ENCODE measurements at regions of chr19 and their contacts with region 1.

Region 1: DNA sequence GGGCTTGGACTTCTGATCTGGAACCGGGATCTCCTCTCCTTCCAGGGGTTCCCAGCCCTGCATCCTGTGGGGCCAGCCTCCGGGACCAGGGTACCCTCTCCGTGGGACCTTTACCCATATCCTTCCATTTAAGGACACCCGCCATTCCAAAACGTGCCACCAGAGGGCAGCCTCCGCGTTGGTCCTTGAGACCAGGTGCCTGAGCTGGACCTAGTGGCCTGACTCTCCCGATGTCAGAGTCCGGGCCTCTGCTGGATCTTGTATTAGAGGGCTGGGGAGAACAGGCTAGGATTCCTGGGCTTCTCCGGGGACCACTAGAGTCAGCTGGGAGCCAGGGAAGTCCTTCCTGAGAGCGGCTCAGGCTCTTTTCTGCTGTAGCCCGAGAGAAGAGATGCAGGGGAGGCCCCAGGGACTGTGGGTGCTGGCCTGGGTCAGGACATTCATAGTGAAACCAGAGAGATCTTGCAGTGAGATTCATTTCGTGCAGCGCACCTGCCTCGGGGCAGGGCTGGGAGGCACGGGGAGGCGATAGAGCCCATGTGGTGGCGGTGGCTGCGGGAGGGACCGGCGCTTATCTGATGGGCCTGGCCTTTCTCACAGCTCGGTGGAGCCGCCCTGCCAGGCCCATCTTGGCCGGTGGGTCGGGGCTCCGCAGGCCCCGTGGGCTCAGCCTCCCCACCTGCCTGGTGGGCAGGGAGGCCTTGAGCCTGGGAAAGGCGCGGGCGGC is 9.8 kb upstream of the SLC7A10 start:
- DNase-seq: peak; percentile 87
- ATAC-seq: peak; percentile 94
- H3K4me3 Mint-ChIP-seq: peak overlapping the region; percentile 30
- H3K27ac Mint-ChIP-seq: no peak overlapping the region
- H3K4me1 Mint-ChIP-seq: peaks cover 7% of the 10 kb centered on the region
- H3K27me3 Mint-ChIP-seq: peaks cover 5% of the 10 kb centered on the region

Region 2: GRCh38 chr19:33143897-33144405 is 91.5 kb before region 1 on chr19:
- CTCF ChIA-PET with region 1: no interaction called
- POLR2A ChIA-PET with region 1: no interaction called
- intact Hi-C with region 1: loop called (anchors 1 to 5 kb)
- DNase-seq: peak; percentile 80
- ATAC-seq: peak; percentile 99
- H3K4me3 Mint-ChIP-seq: peak overlapping the region; percentile 1
- H3K27ac Mint-ChIP-seq: no peak overlapping the region
- H3K4me1 Mint-ChIP-seq: peaks cover 4% of the 10 kb centered on the region
- H3K27me3 Mint-ChIP-seq: no peaks in the 10 kb centered on the region

Region 3: DNA sequence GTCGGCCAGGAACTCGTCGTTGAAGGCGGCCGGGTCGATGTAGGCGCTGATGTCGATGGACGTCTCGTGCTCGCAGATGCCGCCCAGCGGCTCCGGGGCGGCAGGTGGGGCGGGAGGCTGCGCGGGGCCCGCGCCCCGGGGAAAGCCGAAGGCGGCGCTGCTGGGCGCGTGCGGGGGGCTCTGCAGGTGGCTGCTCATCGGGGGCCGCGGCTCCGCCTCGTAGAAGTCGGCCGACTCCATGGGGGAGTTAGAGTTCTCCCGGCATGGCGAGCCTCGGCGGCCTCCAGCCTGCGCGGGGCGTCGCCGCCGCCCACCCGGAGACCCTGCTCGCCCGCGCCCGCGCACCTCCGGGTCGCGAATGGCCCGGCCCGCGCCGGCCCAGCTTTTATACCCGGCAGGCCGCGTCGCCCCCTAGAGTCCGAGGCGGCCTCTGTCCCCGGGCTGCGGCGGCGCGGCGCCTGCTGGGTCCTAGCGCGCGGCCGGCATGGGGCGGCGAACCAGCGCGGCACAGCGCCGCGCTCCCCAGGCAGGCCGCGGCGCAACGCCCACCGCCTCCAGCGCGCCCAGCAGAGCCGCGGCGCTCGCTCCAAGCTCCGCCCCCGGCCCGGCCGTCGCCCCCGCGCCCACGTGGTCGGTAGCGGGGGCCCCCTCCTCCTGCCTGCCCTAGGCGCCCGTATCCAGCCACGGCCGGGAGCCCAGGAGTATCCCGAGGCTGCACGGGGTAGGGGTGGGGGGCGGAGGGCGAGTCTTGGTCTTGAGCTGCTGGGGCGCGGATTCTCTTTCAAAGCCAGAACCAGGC is 66.9 kb after region 1 on chr19 and contains the start of gene CEBPA:
- CTCF ChIA-PET with region 1: no interaction called
- POLR2A ChIA-PET with region 1: no interaction called
- intact Hi-C with region 1: loop called (anchors 1 to 2 kb)
- DNase-seq: peak; percentile 78
- ATAC-seq: peak; percentile 95
- H3K4me3 Mint-ChIP-seq: peak within 1 kb of the TSS; percentile 45
- H3K27ac Mint-ChIP-seq: no peak within 1 kb of the TSS
- H3K4me1 Mint-ChIP-seq: no peaks in the 10 kb centered on the region
- H3K27me3 Mint-ChIP-seq: peaks cover 33% of the 10 kb centered on the region
- total RNA-seq, gene CEBPA: 0.11 TPM in 1 of 2 experiments, not detected in the other

Region 4: GRCh38 chr19:33406521-33407139 is 171.2 kb after region 1 on chr19:
- CTCF ChIA-PET with region 1: interaction called, 23 read pairs
- POLR2A ChIA-PET with region 1: no interaction called
- intact Hi-C with region 1: loop called (anchors 1 kb)
- DNase-seq: peak; percentile 85
- ATAC-seq: peak; percentile 85
- H3K4me3 Mint-ChIP-seq: no peak overlapping the region
- H3K27ac Mint-ChIP-seq: no peak overlapping the region
- H3K4me1 Mint-ChIP-seq: no peaks in the 10 kb centered on the region
- H3K27me3 Mint-ChIP-seq: no peaks in the 10 kb centered on the region

Region 5: DNA sequence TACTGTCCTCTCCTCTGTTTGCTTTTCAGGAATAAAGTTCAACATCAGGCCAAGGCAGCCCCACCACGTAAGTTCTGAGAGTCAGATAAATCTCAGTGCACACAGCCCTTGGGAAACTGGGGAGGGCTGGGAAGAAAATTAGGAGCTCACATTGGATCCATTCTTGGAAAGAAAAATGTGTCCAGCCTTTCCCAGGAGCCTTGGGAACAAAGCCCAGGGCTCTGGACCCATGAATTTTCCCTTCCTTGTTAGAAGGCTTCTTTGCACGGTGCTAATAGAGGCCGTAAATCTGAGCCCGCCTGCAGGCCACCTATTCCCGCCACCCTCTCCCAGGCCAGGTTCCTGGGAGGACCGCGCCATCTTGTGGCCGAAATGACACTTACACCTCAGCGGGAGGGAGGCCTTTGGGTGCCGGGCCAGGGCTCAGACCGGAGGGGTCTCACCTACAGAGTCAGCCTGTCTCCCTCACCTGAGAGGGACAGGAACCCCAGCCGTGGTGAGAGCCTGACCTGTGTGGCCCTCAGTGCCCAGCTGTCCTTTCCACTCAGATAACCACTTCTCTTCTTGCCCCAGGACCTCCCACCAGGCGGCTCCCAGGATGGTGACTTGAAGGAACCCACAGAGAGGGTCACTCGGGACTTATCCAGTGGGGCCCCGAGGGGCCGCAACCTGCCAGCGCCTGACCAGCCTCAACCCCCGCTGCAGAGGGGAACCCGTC is 536.1 kb after region 1 on chr19:
- CTCF ChIA-PET with region 1: no interaction called
- POLR2A ChIA-PET with region 1: no interaction called
- intact Hi-C with region 1: loop called in 1 of 2 experiments (anchors 5 kb)
- DNase-seq: peak; percentile 86
- ATAC-seq: peak; percentile 78
- H3K4me3 Mint-ChIP-seq: no peak overlapping the region
- H3K27ac Mint-ChIP-seq: no peak overlapping the region
- H3K4me1 Mint-ChIP-seq: no peaks in the 10 kb centered on the region
- H3K27me3 Mint-ChIP-seq: peaks cover 12% of the 10 kb centered on the region